ENCODE measurements at regions of chr1 and their contacts with region 1.

Region 1: DNA sequence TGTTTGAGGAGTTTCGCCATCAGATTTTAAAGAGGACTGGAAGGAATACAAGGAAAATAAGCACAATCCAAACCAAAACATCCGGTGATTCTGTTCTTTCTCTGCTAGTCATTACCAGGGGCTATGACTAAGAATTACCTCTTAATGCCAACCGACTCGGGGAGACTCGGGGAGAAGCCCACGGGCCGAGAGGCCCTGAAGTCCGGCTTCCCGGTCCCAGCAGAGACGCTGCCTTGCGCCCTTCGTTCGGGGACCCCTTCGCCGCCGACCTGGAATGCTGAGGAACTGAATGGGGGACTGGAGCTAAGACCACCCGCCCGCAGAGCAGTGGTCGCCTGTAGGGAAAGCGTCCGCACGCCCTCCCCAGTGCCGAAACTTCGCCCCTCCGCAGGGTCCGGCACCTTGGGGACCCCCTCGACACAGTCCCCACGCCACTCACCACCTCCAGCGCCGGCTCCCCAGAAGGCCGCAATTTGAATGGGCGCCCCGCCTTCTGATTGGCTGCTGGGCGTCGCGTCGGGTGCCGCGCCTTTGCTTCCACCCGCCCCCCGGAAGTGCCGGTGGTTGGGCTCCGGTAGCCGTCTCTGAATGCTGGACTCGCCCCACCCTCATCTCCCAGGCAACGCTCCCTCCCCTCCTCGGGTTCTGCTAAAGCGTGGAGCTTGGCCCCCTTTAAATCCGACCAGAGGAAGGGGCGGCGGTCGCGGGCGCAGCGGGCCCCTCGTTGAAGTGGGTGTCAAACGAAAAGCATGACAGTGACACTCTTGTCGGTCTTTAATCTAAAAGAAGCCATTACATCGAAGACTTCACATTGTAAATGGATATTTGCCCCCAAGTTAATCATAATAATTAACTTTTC is at the start of gene KIF14:
- DNase-seq: peak; percentile 96
- ATAC-seq: peak; percentile 100
- total RNA-seq, gene KIF14: 0.67 to 2.0 TPM

Region 2: DNA sequence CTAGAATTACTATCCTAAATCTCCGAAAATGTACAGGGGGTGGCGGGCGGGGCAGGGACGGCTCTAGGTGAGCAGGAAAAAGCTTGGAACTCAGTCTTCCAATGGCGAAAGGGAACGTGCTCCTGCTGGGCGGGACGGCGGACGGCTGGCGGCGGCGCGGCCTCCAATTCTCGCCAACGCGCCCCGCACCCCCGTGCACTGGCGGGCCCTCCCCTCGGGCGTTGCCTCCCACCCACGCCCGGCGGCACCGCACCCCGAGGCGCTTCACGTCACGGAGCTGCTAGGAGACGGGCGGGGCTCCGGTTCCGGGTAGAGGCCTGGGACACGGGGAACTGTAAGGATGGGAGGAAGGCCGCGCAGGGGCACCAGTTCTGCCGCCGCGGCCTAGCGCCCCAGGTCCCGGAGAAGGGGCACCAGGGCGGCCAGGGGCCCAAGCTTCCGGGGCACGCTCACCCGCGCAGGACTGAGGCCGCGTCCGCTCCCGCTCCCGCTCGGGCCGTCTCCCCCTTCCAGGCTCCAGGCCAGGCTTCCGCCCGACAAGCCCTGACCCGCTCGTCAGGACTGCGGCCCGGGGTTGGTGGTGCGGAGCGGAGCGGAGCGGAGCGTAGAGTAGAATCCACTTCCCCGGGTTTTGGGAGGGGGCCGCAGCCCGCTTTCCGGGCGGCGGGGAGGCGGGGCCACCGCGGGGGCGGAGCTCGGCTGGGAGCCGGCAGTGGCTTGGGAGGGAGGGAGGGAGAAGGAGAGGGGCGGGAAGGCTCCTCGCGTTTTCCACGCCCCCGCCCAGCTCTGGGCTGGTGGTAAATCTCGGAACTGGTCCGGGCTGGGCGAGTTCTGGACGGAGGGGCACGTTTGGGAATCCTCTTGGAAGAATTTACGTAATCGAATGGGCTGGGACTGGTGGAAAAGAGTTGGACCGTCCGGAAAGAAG is 49.1 kb after region 1 on chr1 and contains the start of gene DDX59:
- intact Hi-C with region 1: loop called in 1 of 2 experiments (anchors 5 kb)
- DNase-seq: peak; percentile 96
- ATAC-seq: peak; percentile 92
- total RNA-seq, gene DDX59: 14.2 to 20.5 TPM

Region 3: DNA sequence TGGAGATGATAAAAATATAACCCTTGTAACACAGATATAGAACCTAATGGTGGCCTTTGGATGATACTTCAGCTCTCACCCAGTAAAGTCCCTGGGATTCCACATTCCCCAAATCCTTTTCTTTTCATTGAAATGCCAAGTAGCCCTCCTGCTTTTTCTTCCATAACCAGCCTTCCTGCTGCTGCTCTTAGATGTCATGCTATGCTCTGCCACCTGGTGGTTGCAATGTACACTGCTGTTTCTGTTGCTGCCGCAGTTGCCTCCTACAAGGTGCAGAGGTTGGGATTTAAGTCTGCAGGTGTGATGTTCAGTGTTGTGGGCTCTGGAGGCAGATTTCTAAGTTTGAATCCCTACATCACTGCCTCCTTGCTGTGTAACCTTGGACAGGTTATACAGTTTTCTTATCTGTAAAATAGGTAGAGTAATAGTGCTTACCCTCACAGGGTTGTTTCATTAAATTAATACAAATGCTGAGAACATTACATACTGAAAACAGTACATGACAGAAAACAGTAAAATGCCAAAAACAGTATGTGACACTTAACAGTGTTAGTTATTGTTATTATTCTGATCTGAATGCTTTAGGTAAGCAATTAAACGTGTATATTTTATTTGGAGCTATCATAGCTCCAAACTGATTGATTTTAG is 182.5 kb after region 1 on chr1:
- intact Hi-C with region 1: loop called in 1 of 2 experiments (anchors 10 kb)
- DNase-seq: peak; percentile 70 to 85
- ATAC-seq: peak; percentile 90

Region 4: GRCh38 chr1:200837931-200838571 is 217.5 kb after region 1 on chr1:
- intact Hi-C with region 1: loop called in 1 of 2 experiments (anchors 10 kb)
- DNase-seq: no peak
- ATAC-seq: no peak

Measured in left colon (tissue), 2 donors.